GM10248 (cell line): ENCODE measurements at regions of chr14 and their contacts with region 1.

Region 1: GRCh38 chr14:21092273-21093011 is 6.0 kb downstream of the ZNF219 start:
- DNase-seq: peak; percentile 92
- CTCF ChIP-seq: peak; percentile 100

Region 2: GRCh38 chr14:21032326-21033132 is 59.9 kb before region 1 on chr14:
- CTCF ChIA-PET with region 1: interaction called, 10 read pairs
- POLR2A ChIA-PET with region 1: no interaction called
- DNase-seq: no peak
- CTCF ChIP-seq: no peak

Region 3: DNA sequence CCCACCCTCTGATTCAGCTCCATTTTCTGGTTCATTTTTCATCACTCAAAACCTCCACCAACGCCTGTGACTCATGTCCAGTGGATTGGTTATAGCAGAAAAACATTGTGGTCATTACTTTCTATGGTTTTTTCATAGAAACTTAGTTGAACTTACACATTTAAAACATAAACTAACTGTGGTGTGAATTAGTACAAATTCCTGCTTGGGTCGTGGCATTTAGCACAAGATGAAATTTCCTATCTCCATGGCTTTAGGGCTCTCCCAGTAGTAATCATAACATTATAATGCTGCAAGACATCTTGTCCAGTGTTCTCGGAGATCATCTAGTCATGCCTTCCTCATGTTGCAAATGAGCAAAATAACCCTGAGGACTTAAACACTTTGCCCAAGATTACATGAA is 43.2 kb before region 1 on chr14:
- CTCF ChIA-PET with region 1: interaction called, 11 read pairs
- POLR2A ChIA-PET with region 1: no interaction called
- DNase-seq: no peak
- CTCF ChIP-seq: no peak

Region 4: GRCh38 chr14:21063479-21063878 is 29.0 kb before region 1 on chr14:
- CTCF ChIA-PET with region 1: interaction called, 130 read pairs
- POLR2A ChIA-PET with region 1: no interaction called
- DNase-seq: no peak
- CTCF ChIP-seq: no peak